Adrenal gland (tissue), 19 donors: ENCODE measurements at regions of chr12 and their contacts with region 1.

Region 1: GRCh38 chr12:95532851-95533250 is 18.4 kb downstream of the USP44 start:
- DNase-seq: no peak
- H3K4me3 ChIP-seq: no peak overlapping the region
- H3K27ac ChIP-seq: no peak overlapping the region
- H3K4me1 ChIP-seq: no peaks in the 10 kb centered on the region
- H3K27me3 ChIP-seq: no peaks in the 10 kb centered on the region
- CTCF ChIP-seq: no peak
- POLR2A ChIP-seq: no peak

Region 2: DNA sequence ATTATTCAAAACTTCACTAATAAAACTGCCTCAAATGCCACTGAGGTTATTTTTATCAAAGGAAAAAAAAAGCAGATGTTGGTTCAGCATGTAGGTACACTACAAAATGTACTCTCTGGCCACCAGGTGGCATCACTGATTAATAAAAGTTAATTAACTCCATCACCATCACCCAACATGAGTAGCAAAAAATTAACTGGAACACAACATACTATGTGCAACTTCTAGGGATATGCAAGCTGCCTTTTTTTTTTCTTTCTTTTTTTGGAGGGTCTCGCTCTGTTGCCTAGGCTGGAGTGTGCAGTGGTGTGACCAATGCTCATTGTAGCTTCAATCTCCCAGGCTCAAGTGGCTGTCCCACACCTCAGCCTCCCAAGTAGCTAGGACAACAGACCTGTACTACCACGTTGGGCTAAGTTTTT is 415.7 kb before region 1 on chr12:
- intact Hi-C with region 1: loop called (anchors 10 kb)
- DNase-seq: peak; percentile 69 to 89 (median 76)
- H3K4me3 ChIP-seq: no peak overlapping the region
- H3K27ac ChIP-seq: no peak overlapping the region
- H3K4me1 ChIP-seq: peaks cover 0 to 7% of the 10 kb centered on the region in 2 donors
- H3K27me3 ChIP-seq: no peaks in the 10 kb centered on the region
- CTCF ChIP-seq: peak; percentile 63 to 91 (median 80)
- POLR2A ChIP-seq: no peak

Region 3: DNA sequence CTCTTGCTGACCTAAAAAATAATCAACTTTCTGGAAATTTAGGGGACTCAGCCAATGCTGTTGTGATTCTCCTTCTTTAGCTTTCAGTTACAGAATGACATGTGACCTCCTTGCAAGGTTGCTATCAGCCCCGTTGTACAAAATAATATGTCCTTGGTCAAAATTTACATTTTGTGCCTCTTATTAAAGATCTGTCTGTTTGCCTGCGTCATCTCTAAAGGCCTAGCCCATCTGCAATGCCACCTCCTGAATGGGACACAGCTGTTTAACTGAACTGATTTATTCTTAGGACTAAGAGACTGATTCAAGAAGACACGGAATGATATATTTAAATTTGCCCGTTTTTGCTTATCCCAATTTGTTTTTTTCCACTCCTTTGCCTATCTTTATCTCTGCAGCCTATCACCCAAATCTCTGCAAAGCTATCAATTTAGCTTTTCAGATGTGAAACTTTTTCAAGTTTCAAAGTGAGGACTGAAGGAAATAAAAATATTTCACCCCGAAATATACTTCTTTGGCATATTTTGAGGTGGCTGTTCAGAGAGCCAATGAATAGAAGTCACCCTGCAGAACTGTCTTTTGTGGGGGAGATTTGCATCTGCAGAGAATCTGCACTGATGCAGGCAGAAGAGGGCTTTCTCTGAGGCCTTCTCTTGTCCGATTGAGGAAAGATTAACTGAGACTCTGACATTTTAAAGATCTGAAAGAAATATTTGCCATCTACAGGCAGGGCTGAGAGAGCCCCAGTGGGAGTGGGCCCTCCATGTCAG is 189.2 kb before region 1 on chr12:
- intact Hi-C with region 1: loop called in 1 of 2 experiments (anchors 10 kb)
- DNase-seq: peak in 1 of 7 donors; percentile 6
- H3K4me3 ChIP-seq: no peak overlapping the region
- H3K27ac ChIP-seq: no peak overlapping the region
- H3K4me1 ChIP-seq: peaks cover 0 to 3% of the 10 kb centered on the region in 2 donors
- H3K27me3 ChIP-seq: no peaks in the 10 kb centered on the region
- CTCF ChIP-seq: no peak
- POLR2A ChIP-seq: no peak

Region 4: GRCh38 chr12:95908573-95908972 is 375.7 kb after region 1 on chr12:
- intact Hi-C with region 1: no loop called
- DNase-seq: no peak
- H3K4me3 ChIP-seq: no peak overlapping the region
- H3K27ac ChIP-seq: no peak overlapping the region
- H3K4me1 ChIP-seq: no peaks in the 10 kb centered on the region
- H3K27me3 ChIP-seq: peaks cover 5% of the 10 kb centered on the region
- CTCF ChIP-seq: no peak
- POLR2A ChIP-seq: no peak